Dorsolateral prefrontal cortex (tissue), 120 donors: ENCODE measurements at regions of chr2 and their contacts with region 1.

Region 1: DNA sequence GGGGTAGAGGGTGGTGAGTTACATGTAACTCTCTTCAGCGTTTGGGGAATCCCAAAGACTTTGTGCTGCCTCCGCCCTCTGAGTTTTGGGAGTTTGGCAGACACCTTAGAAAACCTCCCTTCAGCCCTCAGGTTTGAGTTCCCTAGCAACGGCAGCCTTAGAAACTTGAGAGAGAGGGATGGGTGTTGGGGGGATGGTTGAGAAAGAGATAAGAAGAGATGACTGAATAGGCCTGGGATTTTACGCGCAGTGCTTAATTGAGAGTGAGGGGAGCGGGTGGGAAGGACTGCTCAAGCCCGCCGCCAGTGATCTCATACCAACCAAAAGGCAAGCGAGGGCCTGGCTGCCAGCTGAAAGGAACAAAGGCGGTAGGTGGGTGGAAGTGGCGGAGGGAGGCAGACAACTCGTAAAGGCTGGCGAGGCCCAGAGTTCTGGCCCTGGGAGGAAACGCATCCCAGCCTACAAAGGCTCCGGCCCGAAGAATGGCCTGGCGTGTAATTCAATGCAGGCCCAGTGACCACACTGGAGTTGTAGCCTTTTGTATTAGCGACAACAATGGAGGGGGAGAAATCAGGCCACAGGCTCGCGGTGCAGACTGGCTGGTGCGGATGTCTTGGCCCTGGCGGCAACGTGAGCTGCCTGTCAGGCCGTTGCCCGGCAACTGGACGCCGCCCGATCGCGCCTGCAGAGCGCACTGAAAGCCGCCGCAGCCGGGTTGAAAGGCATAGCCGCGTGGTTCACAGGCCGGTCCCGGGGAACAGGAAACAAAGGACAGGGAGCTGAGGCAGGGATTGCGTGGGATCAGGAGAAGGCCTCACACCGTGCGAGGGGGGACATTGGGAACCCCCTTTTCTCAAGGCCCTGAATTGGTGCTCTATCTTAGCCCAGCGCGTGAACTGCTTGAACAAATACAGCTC is 39.9 kb upstream of the DARS1 start:
- DNase-seq: peak; percentile 74 to 93 (median 88)
- H3K4me3 ChIP-seq: peak overlapping the region in 57 of 59 donors; percentile 2 to 59 (median 37)
- H3K27ac ChIP-seq: peak overlapping the region in 58 of 59 donors; percentile 10 to 93 (median 80)
- H3K27me3 ChIP-seq: no peaks in the 10 kb centered on the region
- CTCF ChIP-seq: peak in 15 of 56 donors; percentile 8 to 48 (median 24)

Region 2: DNA sequence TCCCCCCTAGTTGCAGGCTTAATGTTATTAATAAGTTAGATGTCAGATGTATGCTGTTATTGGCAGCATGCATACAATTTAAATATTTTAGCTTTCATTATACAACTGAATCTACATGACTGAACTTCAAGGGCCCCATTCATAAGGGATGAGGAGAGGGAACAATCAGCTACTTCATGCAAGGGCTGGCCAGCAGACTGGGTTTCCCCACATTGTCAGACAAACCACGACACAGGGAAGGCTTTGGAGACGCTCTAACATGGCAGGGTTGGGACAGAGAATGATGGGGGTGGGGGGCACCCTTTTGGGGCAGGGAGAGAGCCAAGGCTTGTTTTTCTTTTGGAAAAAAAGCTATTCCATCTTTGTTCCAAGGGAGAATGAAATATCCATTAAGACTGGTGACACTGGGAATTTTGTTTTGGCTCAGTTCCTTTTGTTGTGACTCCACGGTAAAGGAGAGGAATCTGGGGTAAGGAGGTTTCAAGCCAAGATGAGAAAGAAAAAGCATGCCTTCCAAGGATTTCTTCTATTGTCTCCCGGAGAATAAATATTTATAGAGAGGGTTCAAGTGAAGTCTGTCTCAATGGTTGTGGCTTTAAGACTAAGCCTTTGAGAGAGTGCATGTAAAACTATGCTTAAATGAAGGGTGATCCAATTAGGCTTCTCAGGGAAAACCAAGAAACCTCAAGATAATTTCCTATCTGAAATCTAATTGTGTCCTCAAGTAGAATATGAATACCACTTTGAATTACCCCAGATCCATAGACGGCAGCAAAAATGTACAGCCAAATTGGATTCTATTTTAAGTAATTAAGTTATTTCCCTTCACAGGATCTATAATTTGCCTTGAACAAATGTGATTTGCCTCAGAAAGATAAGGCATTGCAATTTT is 87.2 kb after region 1 on chr2:
- intact Hi-C with region 1: loop called in 1 of 2 experiments (anchors 5 kb)
- DNase-seq: peak in 4 of 10 donors; percentile 49 to 64 (median 58)
- H3K4me3 ChIP-seq: peak overlapping the region in 6 of 59 donors; percentile 6 to 45 (median 26)
- H3K27ac ChIP-seq: peak overlapping the region in 3 of 59 donors; percentile 12 to 37 (median 30)
- H3K27me3 ChIP-seq: peaks cover 0 to 38% (median 3%) of the 10 kb centered on the region in 45 donors
- CTCF ChIP-seq: peak in 1 of 56 donors; percentile 12